ENCODE measurements at regions of chr7 and their contacts with region 1.

Region 1: DNA sequence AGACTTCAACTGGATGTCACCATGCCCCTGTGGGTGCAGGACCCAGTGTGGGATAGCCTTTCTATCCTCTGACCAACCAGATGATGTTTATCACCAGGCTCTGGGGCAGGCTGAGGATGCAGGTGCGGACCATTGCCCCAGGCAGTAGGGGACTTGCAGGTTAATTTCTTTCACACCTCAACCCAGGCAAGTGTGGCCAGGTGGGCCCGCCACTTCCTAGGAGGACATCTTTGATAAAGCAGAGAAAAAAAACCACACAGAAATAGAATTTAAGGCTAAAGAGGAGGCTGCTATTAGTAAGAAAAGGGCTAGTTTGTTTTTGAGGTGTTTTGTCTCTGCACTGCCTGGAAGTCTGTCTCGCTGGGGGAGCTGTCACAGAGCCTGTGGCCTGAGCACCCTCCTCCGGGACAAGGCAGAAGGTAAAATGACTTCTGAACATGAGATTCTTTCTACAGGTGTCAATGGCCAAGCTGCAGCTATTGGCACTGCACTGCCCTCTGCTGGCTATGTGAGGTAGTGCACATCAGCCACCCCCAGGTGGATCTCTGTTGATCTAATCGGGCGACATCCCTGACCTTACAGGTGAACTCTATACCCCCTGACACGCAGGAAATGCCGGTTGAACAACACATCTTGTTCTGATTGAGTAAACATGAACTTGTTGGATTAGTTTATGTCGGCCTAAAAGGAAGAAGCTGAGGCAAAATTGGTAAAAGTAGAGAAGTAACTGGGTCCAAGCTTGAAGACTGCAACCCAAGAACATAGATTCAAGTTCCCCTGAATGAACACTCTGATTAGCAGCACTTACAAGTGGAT is 21.0 kb downstream of the UPP1 start:
- DNase-seq: peak; percentile 69
- H3K4me3 ChIP-seq: no peak overlapping the region
- H3K27ac ChIP-seq: no peak overlapping the region
- H3K4me1 ChIP-seq: no peaks in the 10 kb centered on the region
- H3K27me3 ChIP-seq: no peaks in the 10 kb centered on the region
- CTCF ChIP-seq: peak; percentile 92 to 100 (median 98)
- POLR2A ChIP-seq: no peak

Region 2: DNA sequence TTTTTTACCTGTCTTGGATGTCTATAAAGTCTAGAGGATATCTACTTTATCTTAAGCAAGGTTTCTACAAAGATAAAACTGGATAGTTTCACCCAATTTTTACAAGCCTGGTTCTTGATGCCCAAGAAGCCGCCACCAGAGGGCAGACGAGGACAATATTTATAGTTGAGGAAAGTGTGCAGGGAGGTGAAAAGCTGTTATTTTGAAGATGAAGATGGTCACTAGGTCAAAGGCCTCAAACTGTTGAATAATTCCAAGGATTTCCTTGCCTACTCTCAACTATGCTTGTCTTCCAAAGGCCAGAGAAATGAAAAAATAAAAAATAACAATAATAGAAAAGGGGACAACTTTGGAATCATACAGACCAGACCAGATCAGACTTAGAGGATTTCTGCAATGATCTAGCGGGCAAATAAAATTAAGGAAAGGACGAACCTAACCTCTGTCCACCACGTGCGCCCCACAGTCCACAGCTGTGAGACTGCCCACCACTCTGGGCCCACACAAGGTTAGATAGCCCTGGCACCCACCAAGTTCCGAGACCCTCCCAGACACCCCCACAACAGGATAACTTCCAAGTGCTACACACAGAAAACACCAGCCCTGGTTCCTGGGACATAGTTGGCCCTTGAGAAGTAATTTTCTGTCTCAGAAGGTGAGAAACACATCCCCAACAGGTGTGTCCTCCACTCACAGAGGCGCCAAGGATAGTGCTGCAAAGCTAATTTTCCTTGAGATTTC is 164.6 kb before region 1 on chr7:
- intact Hi-C with region 1: loop called (anchors 2 kb)
- DNase-seq: peak; percentile 61
- H3K4me3 ChIP-seq: no peak overlapping the region
- H3K27ac ChIP-seq: no peak overlapping the region
- H3K4me1 ChIP-seq: no peaks in the 10 kb centered on the region
- H3K27me3 ChIP-seq: no peaks in the 10 kb centered on the region
- CTCF ChIP-seq: peak; percentile 52 to 80 (median 76)
- POLR2A ChIP-seq: no peak

Region 3: GRCh38 chr7:47991741-47992311 is 118.2 kb before region 1 on chr7:
- intact Hi-C with region 1: loop called (anchors 5 kb)
- DNase-seq: peak; percentile 29
- H3K4me3 ChIP-seq: peak overlapping the region; percentile 8 to 16
- H3K27ac ChIP-seq: no peak overlapping the region
- H3K4me1 ChIP-seq: peaks cover 3% of the 10 kb centered on the region
- H3K27me3 ChIP-seq: no peaks in the 10 kb centered on the region
- CTCF ChIP-seq: peak in 2 of 4 experiments; percentile 40 to 54
- POLR2A ChIP-seq: no peak

Region 4: GRCh38 chr7:48035301-48035966 is 74.6 kb before region 1 on chr7 and contains the start of gene C7orf57:
- intact Hi-C with region 1: loop called (anchors 5 kb)
- DNase-seq: peak; percentile 51
- H3K4me3 ChIP-seq: peak within 1 kb of the TSS; percentile 16 to 32
- H3K27ac ChIP-seq: no peak within 1 kb of the TSS
- H3K4me1 ChIP-seq: peaks cover 2% of the 10 kb centered on the region
- H3K27me3 ChIP-seq: peaks cover 3% of the 10 kb centered on the region
- CTCF ChIP-seq: peak in 1 of 4 experiments; percentile 6
- POLR2A ChIP-seq: no peak
- total RNA-seq, gene C7orf57: 0.34 TPM in 1 of 2 donors, not detected in the other

Region 5: GRCh38 chr7:48351900-48352299 is 241.8 kb after region 1 on chr7:
- intact Hi-C with region 1: no loop called
- DNase-seq: no peak
- H3K4me3 ChIP-seq: no peak overlapping the region
- H3K27ac ChIP-seq: no peak overlapping the region
- H3K4me1 ChIP-seq: no peaks in the 10 kb centered on the region
- H3K27me3 ChIP-seq: no peaks in the 10 kb centered on the region
- CTCF ChIP-seq: no peak
- POLR2A ChIP-seq: no peak